Kidney (tissue), 22 donors: ENCODE measurements at regions of chr16 and their contacts with region 1.

Region 1: DNA sequence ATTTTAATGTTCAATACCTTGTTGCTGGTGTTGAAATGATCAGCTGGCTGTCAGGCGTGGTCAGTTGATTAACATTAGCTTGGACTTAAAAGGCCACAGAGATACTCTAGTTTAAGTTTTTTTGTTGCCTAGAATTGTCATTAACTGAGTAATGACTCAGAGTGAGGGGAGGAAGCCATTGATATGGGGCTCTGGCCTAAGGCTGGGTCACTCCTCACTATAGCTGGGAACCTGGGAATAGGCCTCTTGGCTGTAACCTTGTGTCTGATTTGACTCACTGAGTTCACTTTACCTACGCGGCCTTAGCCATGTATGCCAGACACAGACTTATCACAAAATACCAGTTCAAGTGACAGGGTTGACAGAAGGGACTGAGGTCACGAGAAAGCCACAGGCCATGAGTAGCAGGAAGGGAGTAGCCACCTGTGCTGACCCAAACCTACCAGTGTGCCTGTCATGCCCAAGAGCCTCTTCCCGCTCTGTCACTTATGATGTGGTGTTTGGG is 37.9 kb upstream of the ADCY7 start:
- DNase-seq: no peak
- H3K4me3 ChIP-seq: no peak overlapping the region
- H3K27ac ChIP-seq: no peak overlapping the region
- H3K4me1 ChIP-seq: no peaks in the 10 kb centered on the region
- H3K27me3 ChIP-seq: no peaks in the 10 kb centered on the region
- CTCF ChIP-seq: no peak

Region 2: GRCh38 chr16:50354629-50355456 is 126.4 kb after region 1 on chr16:
- intact Hi-C with region 1: loop called (anchors 10 kb)
- DNase-seq: peak in 1 of 5 donors; percentile 27
- H3K4me3 ChIP-seq: no peak overlapping the region
- H3K27ac ChIP-seq: no peak overlapping the region
- H3K4me1 ChIP-seq: no peaks in the 10 kb centered on the region
- H3K27me3 ChIP-seq: no peaks in the 10 kb centered on the region
- CTCF ChIP-seq: peak; percentile 23